Right lobe of liver (tissue), 6 donors: ENCODE measurements at regions of chr4 and their contacts with region 1.

Region 1: DNA sequence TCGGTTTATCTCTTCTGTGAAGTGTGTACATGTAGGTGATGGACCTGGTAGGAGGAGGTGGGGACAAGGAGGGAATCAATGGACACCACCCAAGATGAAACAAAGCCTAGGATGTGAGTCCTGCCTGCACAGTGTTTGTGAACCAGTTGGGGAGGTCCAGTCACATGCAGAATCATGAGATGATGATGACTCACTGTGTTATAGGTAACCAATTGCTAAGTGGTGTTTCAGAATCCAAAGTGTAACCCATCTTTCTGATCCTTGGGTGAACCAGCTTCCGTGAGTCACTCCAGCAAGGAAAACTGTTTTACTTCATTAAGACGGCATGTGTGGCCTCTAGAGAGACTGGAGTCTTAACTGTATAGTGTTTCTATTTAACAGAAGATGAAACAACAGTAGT is 57.9 kb upstream of the HPF1 start:
- DNase-seq: no peak
- ATAC-seq: peak in 1 of 4 donors; percentile 32
- H3K4me3 ChIP-seq: no peak overlapping the region
- H3K27ac ChIP-seq: no peak overlapping the region
- H3K4me1 ChIP-seq: no peaks in the 10 kb centered on the region
- H3K27me3 ChIP-seq: no peaks in the 10 kb centered on the region
- CTCF ChIP-seq: no peak
- POLR2A ChIP-seq: no peak

Region 2: DNA sequence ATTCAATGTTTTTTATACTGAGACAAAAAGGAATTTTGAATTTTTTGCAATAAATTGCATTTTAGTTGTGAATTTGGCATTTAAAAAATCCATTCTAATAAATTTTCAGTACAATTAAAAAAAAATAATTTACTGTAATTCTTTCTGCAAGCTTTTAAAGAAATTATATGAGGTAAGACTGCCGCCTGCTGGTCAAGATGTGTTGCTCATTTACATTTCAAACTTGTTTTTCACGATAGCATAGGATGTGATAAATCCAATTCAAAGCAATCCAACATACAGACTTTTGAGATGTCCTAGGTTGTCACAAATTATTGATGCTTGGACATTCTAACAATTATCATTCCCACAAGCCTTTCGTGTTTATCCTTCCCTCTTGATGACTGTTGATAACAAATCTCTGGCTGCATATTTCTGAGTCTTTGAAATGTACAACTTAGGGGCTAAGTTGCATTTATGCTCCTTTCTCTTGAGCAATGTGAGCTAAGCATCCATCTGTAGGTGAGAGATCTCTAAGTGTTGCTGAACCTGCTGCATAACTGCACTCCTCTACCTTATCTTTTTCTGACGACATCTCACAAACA is 232.3 kb after region 1 on chr4:
- intact Hi-C with region 1: loop called in 1 of 2 experiments (anchors 5 kb)
- DNase-seq: no peak
- ATAC-seq: peak; percentile 61 to 74 (median 74)
- H3K4me3 ChIP-seq: no peak overlapping the region
- H3K27ac ChIP-seq: no peak overlapping the region
- H3K4me1 ChIP-seq: no peaks in the 10 kb centered on the region
- H3K27me3 ChIP-seq: no peaks in the 10 kb centered on the region
- CTCF ChIP-seq: peak; percentile 72 to 87 (median 82)
- POLR2A ChIP-seq: no peak